ENCODE measurements at regions of chr1 and their contacts with region 1.

Region 1: GRCh38 chr1:241998412-241998921 is 431 bp downstream of the MAP1LC3C start:
- DNase-seq: peak; percentile 90

Region 2: DNA sequence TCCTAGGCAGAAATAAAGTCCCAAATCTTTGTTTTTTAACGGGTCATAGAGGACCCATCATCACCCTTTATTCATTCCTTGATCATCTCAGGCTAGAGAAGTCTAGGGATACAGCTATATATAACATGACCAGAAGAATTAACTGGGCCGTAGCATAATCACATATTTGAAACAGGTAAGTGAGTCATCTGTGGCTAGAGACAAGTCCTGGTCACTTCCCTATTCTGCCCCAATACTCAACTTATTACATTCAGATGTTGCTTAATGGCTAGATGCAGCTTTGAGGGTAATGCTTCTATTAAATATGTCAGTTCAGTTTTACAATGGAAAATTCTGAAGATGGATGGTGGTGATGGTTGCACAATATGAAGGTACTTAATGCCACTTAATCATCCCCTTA is 103.5 kb before region 1 on chr1:
- intact Hi-C with region 1: loop called in 1 of 2 experiments (anchors 10 kb)
- DNase-seq: no peak

Region 3: DNA sequence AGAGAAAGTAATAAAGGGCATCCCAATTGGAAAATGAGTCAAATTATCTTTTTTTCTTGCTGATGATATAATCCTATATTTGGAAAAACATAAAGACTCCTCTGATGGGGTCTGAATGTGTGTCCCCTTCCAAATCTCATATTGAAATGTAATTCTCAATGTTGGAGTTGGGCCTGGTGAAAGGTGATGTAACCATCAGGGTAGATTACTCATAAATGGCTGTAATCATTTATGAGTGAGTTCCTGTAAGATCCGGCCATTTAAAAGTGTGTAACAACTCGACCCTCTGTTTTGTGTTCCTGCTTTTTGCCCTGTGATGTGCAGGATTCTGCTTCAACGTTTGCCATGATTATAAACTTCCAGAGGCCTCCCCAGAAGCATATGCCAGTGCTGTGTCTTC is 44.7 kb after region 1 on chr1:
- intact Hi-C with region 1: no loop called
- DNase-seq: no peak

Region 4: GRCh38 chr1:242120432-242120831 is 122.0 kb after region 1 on chr1:
- intact Hi-C with region 1: no loop called
- DNase-seq: no peak

Measured in posterior vena cava (tissue), 2 donors.